Activated naive CD4-positive, alpha-beta T cell treated with anti-CD3 and anti-CD28 coated beads for 36 hours (primary cell): ENCODE measurements at regions of chr12 and their contacts with region 1.

Region 1: GRCh38 chr12:108193917-108194316 is 64.8 kb downstream of the WSCD2 start:
- DNase-seq: peak; percentile 42
- H3K4me3 Mint-ChIP-seq: no peak overlapping the region
- H3K27ac Mint-ChIP-seq: no peak overlapping the region
- H3K4me1 Mint-ChIP-seq: no peaks in the 10 kb centered on the region
- H3K27me3 Mint-ChIP-seq: peaks cover 12% of the 10 kb centered on the region

Region 2: DNA sequence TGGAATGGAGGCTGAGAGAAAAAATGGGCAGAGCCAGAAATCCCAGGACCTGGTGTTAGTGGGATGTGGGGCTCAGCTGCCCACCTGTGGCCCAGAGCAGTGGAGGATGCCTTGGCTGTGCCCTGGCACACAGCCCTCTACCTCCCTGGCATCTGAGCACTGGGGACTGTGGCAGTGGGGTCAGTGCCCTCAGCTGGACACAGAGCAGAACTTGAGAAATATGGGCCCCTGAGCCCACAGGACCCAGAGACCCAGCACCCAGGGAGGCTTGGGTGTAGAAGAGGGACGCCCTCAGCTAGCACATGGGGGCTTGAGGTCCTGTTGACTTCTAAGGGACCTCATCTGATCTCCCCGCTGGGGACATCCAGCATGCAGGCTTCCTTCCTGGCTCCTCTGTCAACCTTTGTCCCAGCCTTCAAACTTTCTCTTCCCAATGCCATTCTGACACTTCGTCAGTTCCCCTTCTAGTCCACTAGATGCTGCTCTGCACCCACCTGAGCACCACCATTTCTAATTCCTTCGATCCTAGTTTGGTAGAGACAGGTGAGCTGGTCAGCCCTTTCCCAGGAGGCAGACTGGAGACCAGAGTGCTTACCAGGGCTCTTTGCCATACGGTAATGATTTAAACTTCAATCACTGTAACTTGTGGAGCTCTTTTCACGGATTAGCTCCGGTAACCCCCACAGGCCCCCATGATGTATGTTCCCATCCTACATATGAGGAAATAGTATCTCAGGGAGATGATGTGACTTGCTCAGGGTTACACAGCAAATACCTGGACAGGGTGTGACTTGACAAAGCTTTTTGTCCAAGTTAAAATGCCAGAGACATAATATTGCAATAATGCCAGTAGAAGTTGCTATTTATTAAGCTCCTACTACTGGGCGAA is 275.8 kb before region 1 on chr12:
- CTCF ChIA-PET with region 1: no interaction called
- intact Hi-C with region 1: loop called (anchors 5 kb)
- DNase-seq: peak; percentile 18
- H3K4me3 Mint-ChIP-seq: no peak overlapping the region
- H3K27ac Mint-ChIP-seq: no peak overlapping the region
- H3K4me1 Mint-ChIP-seq: no peaks in the 10 kb centered on the region
- H3K27me3 Mint-ChIP-seq: peaks cover 32% of the 10 kb centered on the region

Region 3: DNA sequence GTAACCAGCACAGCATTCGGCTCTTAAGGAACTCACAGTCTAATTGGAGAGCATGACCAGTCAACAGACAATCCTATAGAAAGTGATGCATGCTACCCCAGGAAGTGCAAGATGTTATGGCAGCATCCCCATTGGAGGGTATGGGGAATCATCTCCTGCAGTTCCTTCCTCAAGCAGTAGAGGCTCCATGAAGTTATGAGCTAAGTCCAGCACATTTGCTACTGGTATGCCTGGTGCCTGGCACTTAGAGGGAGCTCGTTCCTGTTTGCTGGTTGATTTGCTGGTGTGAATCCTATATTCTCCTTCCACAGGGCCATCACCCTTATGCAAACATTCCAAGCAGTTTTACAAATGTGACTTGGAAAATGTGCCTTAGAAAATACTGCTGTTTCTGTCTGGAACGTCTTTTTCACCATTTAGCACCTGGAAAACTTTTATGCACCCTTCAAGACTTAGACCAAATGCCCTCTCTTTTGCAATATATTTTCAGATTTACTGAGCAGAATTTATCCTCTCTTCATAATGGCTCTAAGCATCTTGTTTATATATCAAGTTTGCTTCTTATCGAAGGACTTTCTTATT is 201.0 kb before region 1 on chr12:
- CTCF ChIA-PET with region 1: interaction called, 3 read pairs
- intact Hi-C with region 1: loop called (anchors 1 kb)
- DNase-seq: no peak
- H3K4me3 Mint-ChIP-seq: no peak overlapping the region
- H3K27ac Mint-ChIP-seq: no peak overlapping the region
- H3K4me1 Mint-ChIP-seq: no peaks in the 10 kb centered on the region
- H3K27me3 Mint-ChIP-seq: peaks cover 20% of the 10 kb centered on the region

Region 4: GRCh38 chr12:108063192-108063591 is 130.7 kb before region 1 on chr12:
- CTCF ChIA-PET with region 1: no interaction called
- intact Hi-C with region 1: loop called (anchors 10 kb)
- DNase-seq: no peak
- H3K4me3 Mint-ChIP-seq: no peak overlapping the region
- H3K27ac Mint-ChIP-seq: no peak overlapping the region
- H3K4me1 Mint-ChIP-seq: no peaks in the 10 kb centered on the region
- H3K27me3 Mint-ChIP-seq: peaks cover 12% of the 10 kb centered on the region

Region 5: GRCh38 chr12:108214486-108214885 is 20.6 kb after region 1 on chr12:
- CTCF ChIA-PET with region 1: no interaction called
- intact Hi-C with region 1: no loop called
- DNase-seq: peak; percentile 49
- H3K4me3 Mint-ChIP-seq: no peak overlapping the region
- H3K27ac Mint-ChIP-seq: no peak overlapping the region
- H3K4me1 Mint-ChIP-seq: no peaks in the 10 kb centered on the region
- H3K27me3 Mint-ChIP-seq: peaks cover 20% of the 10 kb centered on the region